A549 (cell line): ENCODE measurements at regions of chr17 and their contacts with region 1.

Region 1: GRCh38 chr17:50547035-50547735 is at the start of gene SPATA20:
- DNase-seq: peak; percentile 89 to 93
- ATAC-seq: peak; percentile 72 to 84
- H3K4me3 ChIP-seq: peak within 1 kb of the TSS; percentile 67
- H3K27ac ChIP-seq: peak within 1 kb of the TSS; percentile 95 to 98
- H3K4me1 ChIP-seq: peaks cover 50% of the 10 kb centered on the region
- CTCF ChIP-seq: peak; percentile 99
- EP300 ChIP-seq: no peak
- POLR2A ChIP-seq: peak; percentile 83
- RAD21 ChIP-seq: peak; percentile 99 to 100
- polyA plus RNA-seq, gene SPATA20: 34.4 and 48.5 TPM in 2 replicates

Region 2: DNA sequence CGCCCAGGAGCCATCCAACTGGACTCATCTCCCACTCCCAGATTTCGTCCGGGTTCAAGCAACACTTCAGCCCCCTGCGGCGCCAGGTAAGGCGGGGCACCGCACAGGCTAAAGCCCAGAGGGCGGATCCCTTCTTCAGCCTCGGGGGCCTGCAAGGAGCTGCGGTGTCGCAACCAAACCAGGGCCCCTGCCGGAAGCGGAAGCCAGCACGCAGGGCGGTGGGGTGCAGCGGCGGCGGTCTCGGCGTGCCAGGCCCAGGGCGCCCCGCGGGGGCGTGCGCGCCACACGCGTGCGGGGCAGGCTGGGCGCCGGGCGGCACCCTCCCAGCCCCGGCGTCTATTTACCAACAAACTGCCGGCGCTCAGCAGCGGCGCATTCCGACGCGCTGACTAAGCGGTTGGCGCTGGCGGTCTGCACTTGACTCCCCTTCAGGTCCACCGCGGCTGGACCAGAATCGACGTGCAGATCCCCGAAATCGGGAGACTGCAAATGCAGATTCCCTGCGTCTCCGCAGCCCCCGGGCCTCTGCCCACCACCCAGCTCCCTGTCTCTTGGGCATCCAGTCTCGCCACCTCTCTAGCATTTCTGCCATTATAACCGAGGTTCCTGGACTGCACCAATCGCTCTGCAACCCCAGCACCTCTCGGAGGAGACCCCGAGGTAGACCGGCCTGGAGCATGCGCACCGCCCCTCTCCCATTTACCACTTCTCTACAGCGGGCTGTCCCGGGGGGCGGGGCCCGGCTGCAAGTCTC is 578.6 kb before region 1 on chr17:
- CTCF ChIA-PET with region 1: no interaction called
- POLR2A ChIA-PET with region 1: no interaction called
- DNase-seq: peak; percentile 86 to 95
- ATAC-seq: peak; percentile 83 to 92
- H3K4me3 ChIP-seq: peak overlapping the region; percentile 69
- H3K27ac ChIP-seq: peak overlapping the region; percentile 82 to 92
- H3K4me1 ChIP-seq: peaks cover 12% of the 10 kb centered on the region; the same call in 2 of the 3 replicates
- CTCF ChIP-seq: no peak
- EP300 ChIP-seq: no peak
- POLR2A ChIP-seq: peak; percentile 70
- RAD21 ChIP-seq: 0 out of 5 replicates have a peak, but pooled peaks of 1 of the 2 experiments have one; percentile 20

Region 3: GRCh38 chr17:50458701-50459676 is 88.2 kb before region 1 on chr17:
- CTCF ChIA-PET with region 1: no interaction called
- POLR2A ChIA-PET with region 1: no interaction called
- DNase-seq: peak in 1 of 2 experiments; percentile 48
- ATAC-seq: peak in 1 of 2 experiments; percentile 58; a peak in 3 of 6 replicates
- H3K4me3 ChIP-seq: no peak overlapping the region
- H3K27ac ChIP-seq: no peak overlapping the region
- H3K4me1 ChIP-seq: peaks cover 9% of the 10 kb centered on the region; the same call in 2 of the 3 replicates
- CTCF ChIP-seq: no peak
- EP300 ChIP-seq: no peak
- POLR2A ChIP-seq: no peak
- RAD21 ChIP-seq: no peak

Region 4: DNA sequence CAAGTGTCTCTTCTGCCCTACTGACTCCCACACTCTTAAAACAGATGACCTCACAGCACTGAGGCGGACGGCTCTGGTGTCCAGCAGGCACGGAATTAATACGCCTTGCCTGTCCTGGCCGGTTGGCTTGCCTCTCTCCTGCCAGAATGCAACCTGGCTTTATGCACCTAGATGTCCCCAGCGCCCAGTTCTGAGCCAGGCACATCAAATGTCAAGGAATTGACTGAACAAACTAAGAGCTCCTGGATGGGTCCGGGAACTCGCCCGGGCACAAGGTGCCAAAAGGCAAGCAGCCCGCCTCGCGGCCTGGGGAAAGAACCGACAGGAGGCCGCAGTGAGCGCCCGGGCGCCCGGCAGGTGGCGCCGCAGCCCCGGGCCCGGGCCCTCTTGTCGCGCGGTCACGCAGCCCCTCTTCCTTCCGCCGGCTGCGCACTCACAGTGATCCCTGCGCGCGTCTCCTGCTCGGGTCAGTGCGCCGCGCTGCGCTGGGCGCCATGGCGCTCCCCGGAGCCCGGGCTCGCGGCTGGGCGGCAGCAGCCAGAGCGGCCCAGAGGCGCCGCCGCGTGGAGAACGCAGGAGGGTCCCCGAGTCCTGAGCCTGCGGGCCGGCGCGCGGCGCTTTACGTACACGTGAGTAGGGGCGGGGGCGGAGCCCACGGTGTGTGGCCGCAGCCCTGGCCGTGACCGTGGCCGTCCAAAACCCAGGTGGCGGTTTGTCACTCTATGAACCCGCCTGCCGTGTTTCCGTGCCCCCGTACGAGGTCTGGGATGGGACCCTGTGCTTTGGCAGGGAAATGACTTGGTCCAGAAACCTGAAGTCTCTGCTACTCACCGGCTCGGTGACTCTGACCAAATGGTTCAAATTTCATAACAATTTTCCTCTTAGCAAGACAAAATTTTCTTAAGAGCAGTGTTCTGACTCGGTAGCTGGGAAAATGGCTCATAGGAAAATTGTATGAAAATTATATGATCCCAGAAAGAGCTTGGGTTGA is 68.5 kb before region 1 on chr17 and contains the start of gene RSAD1:
- CTCF ChIA-PET with region 1: interaction called, 18 read pairs
- POLR2A ChIA-PET with region 1: interaction called, 5 read pairs
- DNase-seq: peak; percentile 85 to 96
- ATAC-seq: peak; percentile 78 to 89
- H3K4me3 ChIP-seq: peak within 1 kb of the TSS; percentile 65
- H3K27ac ChIP-seq: peak within 1 kb of the TSS; percentile 79 to 91
- H3K4me1 ChIP-seq: peaks cover 31% of the 10 kb centered on the region
- CTCF ChIP-seq: peak; percentile 100
- EP300 ChIP-seq: no peak
- POLR2A ChIP-seq: peak; percentile 90
- RAD21 ChIP-seq: peak; percentile 41 to 78
- polyA plus RNA-seq, gene RSAD1: 38.2 and 47.2 TPM in 2 replicates

Region 5: DNA sequence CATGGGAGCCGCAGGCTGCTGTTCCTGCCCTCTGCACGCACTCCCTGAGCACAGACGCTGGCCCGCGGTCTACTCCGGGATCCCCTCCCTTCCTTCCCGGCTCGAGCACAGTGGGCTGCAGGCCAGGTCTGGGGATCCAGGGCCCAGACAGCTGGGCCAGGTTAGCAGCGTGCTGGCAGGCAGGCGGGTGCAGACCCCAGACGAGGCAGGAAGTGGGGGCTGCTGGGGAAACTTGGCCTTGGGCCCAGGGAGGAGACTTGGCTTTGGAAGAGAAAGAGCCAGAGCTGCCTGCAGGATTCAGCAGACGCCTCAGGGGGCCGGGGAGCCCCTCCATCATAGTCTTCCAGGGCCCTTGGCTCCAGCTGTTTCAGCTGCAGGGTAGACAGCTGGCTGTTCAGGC is 57.3 kb after region 1 on chr17:
- CTCF ChIA-PET with region 1: interaction called, 18 read pairs
- POLR2A ChIA-PET with region 1: no interaction called
- DNase-seq: no peak
- ATAC-seq: peak in 1 of 2 experiments; percentile 19; a peak in 3 of 6 replicates
- H3K4me3 ChIP-seq: no peak overlapping the region
- H3K27ac ChIP-seq: no peak overlapping the region; a peak in 1 of 6 replicates
- H3K4me1 ChIP-seq: no peaks in the 10 kb centered on the region
- CTCF ChIP-seq: no peak
- EP300 ChIP-seq: no peak
- POLR2A ChIP-seq: no peak
- RAD21 ChIP-seq: no peak

Region 6: DNA sequence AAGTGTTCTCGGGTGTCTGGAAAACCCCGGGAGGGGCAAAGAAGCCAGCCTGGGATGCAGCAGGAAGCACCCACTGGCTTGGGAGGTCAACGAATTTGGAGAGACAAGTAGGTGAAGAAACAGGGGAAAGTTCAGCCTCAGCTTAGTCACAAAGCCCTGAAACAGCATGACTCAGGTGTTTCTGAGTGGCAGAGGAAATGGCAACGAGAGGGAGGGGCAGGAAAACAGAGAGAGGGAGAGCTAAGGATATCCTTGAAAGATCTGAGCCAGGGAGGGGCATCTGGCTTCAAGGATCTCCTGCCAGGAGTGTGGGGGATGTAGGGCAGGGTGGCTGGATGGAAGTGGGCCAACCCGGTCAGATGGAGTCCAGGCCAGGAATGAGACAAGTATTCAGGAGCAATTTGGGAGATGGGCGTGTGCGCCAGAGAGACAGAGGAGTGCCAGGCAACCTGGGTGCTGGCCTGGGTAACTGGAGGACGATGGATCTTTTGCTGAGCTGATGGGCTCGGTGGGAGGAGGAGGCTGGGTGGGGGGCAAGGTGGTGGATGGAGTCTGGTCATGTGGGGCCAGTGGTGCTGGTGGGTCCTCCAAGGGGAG is 114.7 kb after region 1 on chr17:
- CTCF ChIA-PET with region 1: interaction called, 48 read pairs
- POLR2A ChIA-PET with region 1: interaction called, 8 read pairs
- DNase-seq: peak; percentile 100
- ATAC-seq: peak; percentile 61 to 75
- H3K4me3 ChIP-seq: 0 out of 3 replicates have a peak overlapping the region, but pooled peaks have one; percentile 8
- H3K27ac ChIP-seq: peak overlapping the region; percentile 98
- H3K4me1 ChIP-seq: peaks cover 97% of the 10 kb centered on the region
- CTCF ChIP-seq: no peak
- EP300 ChIP-seq: peak; percentile 96 to 98
- POLR2A ChIP-seq: no peak
- RAD21 ChIP-seq: peak; percentile 21 to 65; a peak in 4 of 5 replicates

Region 7: GRCh38 chr17:50697663-50698274 is 150.6 kb after region 1 on chr17:
- CTCF ChIA-PET with region 1: interaction called, 753 read pairs
- POLR2A ChIA-PET with region 1: interaction called, 22 read pairs
- DNase-seq: peak in 1 of 2 experiments; percentile 61
- ATAC-seq: no peak
- H3K4me3 ChIP-seq: no peak overlapping the region
- H3K27ac ChIP-seq: peak overlapping the region; percentile 97 to 98
- H3K4me1 ChIP-seq: peaks cover 98% of the 10 kb centered on the region
- CTCF ChIP-seq: peak; percentile 64
- EP300 ChIP-seq: no peak
- POLR2A ChIP-seq: no peak
- RAD21 ChIP-seq: peak; percentile 79 to 80

Region 8: DNA sequence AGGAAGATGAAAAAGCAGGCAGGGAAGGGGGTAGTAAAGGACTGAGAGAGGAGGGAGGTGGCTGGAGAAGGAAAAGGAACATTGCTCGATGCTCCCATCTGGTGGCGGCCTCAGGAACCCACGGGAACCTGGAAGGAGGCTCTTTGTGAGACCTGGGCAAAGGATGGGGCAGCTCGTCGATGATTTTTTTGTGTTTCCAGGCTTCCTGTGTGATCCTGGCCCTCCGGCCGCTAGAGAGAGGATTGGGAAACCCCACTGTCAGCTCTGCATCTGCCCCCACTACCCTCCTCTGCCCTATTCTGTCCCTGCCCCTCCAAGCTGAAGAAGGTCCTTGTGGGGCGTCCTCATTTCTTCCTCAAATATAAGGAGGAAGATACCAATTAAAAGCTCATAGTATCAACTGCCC is 294.8 kb after region 1 on chr17:
- CTCF ChIA-PET with region 1: interaction called, 202 read pairs
- POLR2A ChIA-PET with region 1: no interaction called
- DNase-seq: peak; percentile 76 to 94
- ATAC-seq: peak; percentile 85 to 94
- H3K4me3 ChIP-seq: no peak overlapping the region
- H3K27ac ChIP-seq: 0 out of 6 replicates have a peak overlapping the region, but pooled peaks of 1 of the 2 experiments have one; percentile 17
- H3K4me1 ChIP-seq: peaks cover 13% of the 10 kb centered on the region
- CTCF ChIP-seq: peak; percentile 93
- EP300 ChIP-seq: no peak
- POLR2A ChIP-seq: no peak
- RAD21 ChIP-seq: peak; percentile 93 to 94